Activated T-helper 1 cell treated with anti-CD3 and anti-CD28 coated beads, Interleukin-12 subunit alpha, Interleukin-12 subunit beta, Interleukin-2, Interleukin-4 antibody, amounts not matched to agents 30 ng/mL and 10 ng/mL and 1 ng/mL, durations not matched to agents 14 hours and 24 hours and 36 hours (primary cell): ENCODE measurements at regions of chr3 and their contacts with region 1.

Region 1: GRCh38 chr3:49802719-49803464 is at the start of gene INKA1:
- DNase-seq: peak; percentile 82
- H3K4me3 Mint-ChIP-seq: peak within 1 kb of the TSS; percentile 84
- H3K27ac Mint-ChIP-seq: peak within 1 kb of the TSS; percentile 70
- H3K4me1 Mint-ChIP-seq: peaks cover 23% of the 10 kb centered on the region
- H3K27me3 Mint-ChIP-seq: peaks cover 10% of the 10 kb centered on the region
- total RNA-seq, gene INKA1: 1.3 and 2.7 TPM in 2 replicates

Region 2: DNA sequence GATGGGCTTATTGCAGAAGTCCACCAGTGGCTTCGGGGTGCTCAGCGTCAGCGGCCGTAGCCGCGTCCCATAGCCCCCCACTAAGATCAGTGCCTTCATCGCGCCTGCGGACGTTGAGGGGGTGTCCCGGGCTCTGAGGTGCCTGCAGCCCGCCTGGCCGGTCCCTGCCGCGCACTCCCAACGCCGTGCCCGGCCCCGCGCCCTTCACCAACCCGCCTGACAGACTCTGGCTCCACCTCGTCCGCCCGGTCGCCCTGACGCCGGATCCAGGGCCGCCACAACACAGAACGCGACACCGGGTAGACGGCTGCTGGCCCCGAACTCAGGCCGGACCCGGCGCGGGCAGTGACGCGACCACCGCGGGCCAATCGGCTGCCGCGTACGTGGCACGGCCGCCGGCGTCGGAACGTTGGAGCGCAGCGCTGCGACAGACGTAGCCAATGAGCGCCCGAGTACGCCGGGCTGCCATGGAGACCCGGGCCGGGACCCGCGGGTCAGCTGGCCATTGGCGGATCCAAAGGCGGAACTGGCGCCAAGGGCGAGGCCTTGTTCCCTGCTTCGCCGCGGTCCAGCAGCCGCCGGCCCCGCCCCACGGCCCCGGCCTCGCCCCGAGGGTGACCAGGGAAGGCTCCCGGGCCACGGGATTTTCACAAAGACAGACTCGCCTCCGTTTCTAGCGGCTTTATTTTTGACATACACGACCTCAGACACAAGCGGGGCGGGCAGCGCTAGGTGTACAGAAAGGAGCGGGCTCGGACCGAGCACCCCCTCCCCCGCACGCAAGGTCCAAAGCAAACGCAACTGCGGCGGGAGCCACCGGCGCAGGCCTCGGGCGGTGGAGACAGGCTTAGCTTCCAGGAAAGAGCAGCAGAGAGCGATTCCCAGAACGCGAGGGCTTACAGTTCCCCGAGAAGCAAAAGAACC is 79.0 kb before region 1 on chr3 and contains the start of gene GMPPB:
- intact Hi-C with region 1: loop called (anchors 1 kb)
- DNase-seq: peak; percentile 95
- H3K4me3 Mint-ChIP-seq: peak within 1 kb of the TSS; percentile 95
- H3K27ac Mint-ChIP-seq: peak within 1 kb of the TSS; percentile 95
- H3K4me1 Mint-ChIP-seq: peaks cover 34% of the 10 kb centered on the region
- H3K27me3 Mint-ChIP-seq: no peaks in the 10 kb centered on the region
- total RNA-seq, gene GMPPB: 49.1 and 49.2 TPM in 2 replicates

Region 3: GRCh38 chr3:49813497-49814174 is 10.7 kb after region 1 on chr3 and contains the start of gene UBA7:
- intact Hi-C with region 1: loop called (anchors 1 kb)
- DNase-seq: peak; percentile 40
- H3K4me3 Mint-ChIP-seq: peak within 1 kb of the TSS; percentile 94
- H3K27ac Mint-ChIP-seq: peak within 1 kb of the TSS; percentile 94
- H3K4me1 Mint-ChIP-seq: peaks cover 27% of the 10 kb centered on the region
- H3K27me3 Mint-ChIP-seq: no peaks in the 10 kb centered on the region
- total RNA-seq, gene UBA7: 90.3 and 97.5 TPM in 2 replicates

Region 4: DNA sequence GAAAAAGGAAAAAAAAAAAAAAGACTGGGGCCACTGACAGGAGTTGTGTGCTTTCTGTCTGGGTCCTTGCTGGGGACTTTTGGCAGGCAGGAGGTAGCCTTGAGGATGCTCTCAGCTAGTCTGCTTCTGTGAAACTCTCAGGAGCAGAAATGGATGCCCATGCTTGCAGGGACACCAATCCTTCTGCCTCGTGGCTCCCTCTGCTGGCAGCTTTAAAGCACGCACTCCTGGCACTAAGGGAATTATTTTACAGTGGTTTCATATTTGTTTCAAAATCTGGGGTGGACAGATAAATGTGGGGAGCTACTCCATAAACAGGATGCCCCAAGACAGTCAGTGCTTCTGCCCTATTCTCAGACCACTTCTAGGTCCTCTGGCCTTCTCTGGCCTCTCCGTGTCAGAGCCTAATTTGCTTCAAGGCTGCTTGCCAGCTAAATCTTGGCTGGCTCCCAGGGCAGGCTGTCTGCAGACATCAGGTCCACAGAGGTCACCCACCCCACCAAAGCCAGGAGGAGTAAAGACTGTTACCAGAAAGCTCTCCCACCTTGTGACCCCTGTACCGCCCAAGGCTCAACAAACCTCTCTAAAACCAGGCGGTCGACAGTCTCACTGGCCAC is 36.4 kb after region 1 on chr3:
- intact Hi-C with region 1: loop called (anchors 1 kb)
- DNase-seq: peak; percentile 69
- H3K4me3 Mint-ChIP-seq: no peak overlapping the region
- H3K27ac Mint-ChIP-seq: no peak overlapping the region
- H3K4me1 Mint-ChIP-seq: no peaks in the 10 kb centered on the region
- H3K27me3 Mint-ChIP-seq: no peaks in the 10 kb centered on the region

Region 5: GRCh38 chr3:49906004-49906743 is 103.3 kb after region 1 on chr3:
- intact Hi-C with region 1: loop called (anchors 1 kb)
- DNase-seq: peak; percentile 29
- H3K4me3 Mint-ChIP-seq: peak overlapping the region; percentile 16
- H3K27ac Mint-ChIP-seq: peak overlapping the region; percentile 57
- H3K4me1 Mint-ChIP-seq: peaks cover 32% of the 10 kb centered on the region
- H3K27me3 Mint-ChIP-seq: no peaks in the 10 kb centered on the region

Region 6: DNA sequence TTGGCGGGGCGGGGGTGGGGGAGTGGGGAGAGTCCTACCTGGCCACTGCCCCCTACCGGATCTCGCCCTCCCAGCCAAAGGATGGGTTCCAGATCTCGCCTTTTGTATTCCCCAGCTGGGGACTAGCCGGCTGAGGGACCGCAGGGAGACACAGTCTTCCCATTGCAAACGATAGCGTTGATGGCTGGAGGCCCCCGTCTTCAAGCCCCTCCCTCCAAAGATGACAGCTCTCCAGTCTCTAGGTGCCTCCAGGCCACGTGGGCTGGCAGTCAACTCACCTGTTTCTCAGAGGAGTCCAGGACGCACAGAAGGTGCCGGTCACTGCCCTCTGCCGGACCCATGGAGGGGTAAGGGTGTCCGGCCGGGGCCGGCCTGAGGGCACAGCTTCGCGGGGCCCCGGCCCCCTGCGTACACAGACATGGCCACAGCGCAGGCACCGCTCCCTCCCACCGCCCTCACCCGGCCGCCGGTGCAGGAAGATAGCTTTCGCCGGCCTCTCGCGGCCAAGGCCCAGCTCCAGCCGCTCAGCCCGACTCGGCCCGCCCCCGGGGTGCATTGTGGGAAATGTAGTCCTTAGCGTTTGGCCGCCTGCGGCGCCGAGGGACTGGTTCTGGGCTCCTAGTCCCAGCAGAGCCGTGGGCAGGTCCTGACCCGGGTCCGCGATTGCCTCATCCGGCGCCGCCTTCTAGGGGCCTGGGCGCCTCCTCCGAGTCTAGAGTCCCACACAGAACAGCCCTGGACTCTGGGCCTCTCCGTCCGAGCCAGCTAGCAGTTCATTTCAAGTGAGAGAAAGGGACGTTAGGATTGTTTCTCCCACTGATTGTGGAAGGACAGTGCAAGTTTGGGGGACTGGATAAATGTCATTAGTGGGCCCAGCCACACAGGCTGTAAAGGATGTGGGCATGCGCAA is 126.7 kb after region 1 on chr3 and contains the start of gene MON1A:
- intact Hi-C with region 1: loop called (anchors 2 kb)
- DNase-seq: peak; percentile 88
- H3K4me3 Mint-ChIP-seq: peak within 1 kb of the TSS; percentile 90
- H3K27ac Mint-ChIP-seq: peak within 1 kb of the TSS; percentile 81
- H3K4me1 Mint-ChIP-seq: peaks cover 21% of the 10 kb centered on the region
- H3K27me3 Mint-ChIP-seq: no peaks in the 10 kb centered on the region
- total RNA-seq, gene MON1A: 15.5 and 17.3 TPM in 2 replicates

Region 7: GRCh38 chr3:50088725-50089608 is 286.1 kb after region 1 on chr3 and contains the start of gene RBM5:
- intact Hi-C with region 1: loop called (anchors 1 kb)
- DNase-seq: peak; percentile 91
- H3K4me3 Mint-ChIP-seq: peak within 1 kb of the TSS; percentile 97
- H3K27ac Mint-ChIP-seq: peak within 1 kb of the TSS; percentile 95
- H3K4me1 Mint-ChIP-seq: peaks cover 31% of the 10 kb centered on the region
- H3K27me3 Mint-ChIP-seq: no peaks in the 10 kb centered on the region
- total RNA-seq, gene RBM5: 157 and 162 TPM in 2 replicates